ENCODE measurements at regions of chr13 and their contacts with region 1.

Region 1: DNA sequence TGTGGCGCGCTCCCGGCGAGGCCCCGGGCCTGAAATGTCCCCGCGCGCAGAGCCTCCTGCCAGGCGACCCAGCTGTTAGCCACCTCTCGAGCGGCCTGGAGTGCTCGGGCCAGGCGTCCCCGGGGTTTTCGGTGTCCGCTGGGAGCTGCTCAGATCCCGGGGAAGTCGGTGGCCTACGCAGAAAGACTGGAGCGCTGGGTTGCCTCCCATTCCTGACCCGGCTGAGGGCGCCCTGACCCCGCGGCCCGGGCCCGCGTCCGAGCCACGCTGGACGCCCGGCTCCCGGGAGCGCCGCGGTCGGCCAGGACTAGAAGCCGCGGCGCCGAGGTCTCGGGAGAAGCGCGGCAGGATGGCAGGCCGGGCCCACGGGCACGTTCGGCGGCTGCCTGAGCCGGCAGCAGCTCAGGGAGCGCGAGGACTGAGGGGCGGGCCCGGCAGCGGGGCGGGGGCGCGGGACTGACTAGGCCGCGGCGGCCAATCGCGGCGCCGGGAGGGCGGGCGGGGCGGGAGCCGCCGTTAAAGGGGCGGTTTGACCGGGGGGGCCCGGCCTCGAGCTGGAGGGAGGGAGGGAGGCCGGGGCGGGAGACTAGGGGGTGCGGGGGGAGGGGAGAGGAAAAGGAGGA is 1.3 kb upstream of the ZIC2 start:
- DNase-seq: peak in 6 of 9 donors; percentile 44 to 64 (median 55)
- ATAC-seq: peak; percentile 78
- H3K4me3 ChIP-seq: no peak overlapping the region
- H3K4me3 Mint-ChIP-seq: peak overlapping the region in 4 of 10 donors; percentile 42 to 68 (median 59)
- H3K27ac ChIP-seq: no peak overlapping the region
- H3K27ac Mint-ChIP-seq: no peak overlapping the region
- H3K4me1 ChIP-seq: peaks cover 8 to 18% of the 10 kb centered on the region in 2 donors
- H3K4me1 Mint-ChIP-seq: peaks cover 0 to 35% (median 23%) of the 10 kb centered on the region in 7 donors
- H3K27me3 ChIP-seq: peaks cover 22 to 66% of the 10 kb centered on the region in 2 donors
- H3K27me3 Mint-ChIP-seq: peaks cover 51 to 71% (median 54%) of the 10 kb centered on the region in 5 donors

Region 2: GRCh38 chr13:99969919-99970621 is 10.2 kb before region 1 on chr13:
- CTCF ChIA-PET with region 1: no interaction called
- POLR2A ChIA-PET with region 1: interaction called, 4 read pairs
- intact Hi-C with region 1: loop called (anchors 1 kb)
- DNase-seq: peak in 1 of 9 donors; percentile 49
- ATAC-seq: peak; percentile 48
- H3K4me3 ChIP-seq: no peak overlapping the region
- H3K4me3 Mint-ChIP-seq: peak overlapping the region; percentile 82 to 95 (median 86)
- H3K27ac ChIP-seq: no peak overlapping the region
- H3K27ac Mint-ChIP-seq: peak overlapping the region in 8 of 9 donors; percentile 53 to 91 (median 86)
- H3K4me1 ChIP-seq: peaks cover 0 to 10% of the 10 kb centered on the region in 2 donors
- H3K4me1 Mint-ChIP-seq: peaks cover 18 to 34% (median 25%) of the 10 kb centered on the region in 7 donors
- H3K27me3 ChIP-seq: peaks cover 47 to 74% of the 10 kb centered on the region in 2 donors
- H3K27me3 Mint-ChIP-seq: peaks cover 68 to 79% (median 70%) of the 10 kb centered on the region in 5 donors

Region 3: GRCh38 chr13:99990126-99990977 is 10.0 kb after region 1 on chr13:
- CTCF ChIA-PET with region 1: no interaction called
- POLR2A ChIA-PET with region 1: interaction called, 19 read pairs
- intact Hi-C with region 1: loop called (anchors 2 kb)
- DNase-seq: peak in 1 of 9 donors; percentile 19
- ATAC-seq: no peak
- H3K4me3 ChIP-seq: no peak overlapping the region
- H3K4me3 Mint-ChIP-seq: peak overlapping the region in 9 of 10 donors; percentile 23 to 64 (median 49)
- H3K27ac ChIP-seq: no peak overlapping the region
- H3K27ac Mint-ChIP-seq: peak overlapping the region in 3 of 9 donors; percentile 25 to 46 (median 34)
- H3K4me1 ChIP-seq: peaks cover 6 to 25% of the 10 kb centered on the region in 2 donors
- H3K4me1 Mint-ChIP-seq: peaks cover 4 to 36% (median 25%) of the 10 kb centered on the region in 7 donors
- H3K27me3 ChIP-seq: peaks cover 45 to 96% of the 10 kb centered on the region in 2 donors
- H3K27me3 Mint-ChIP-seq: peaks cover 73 to 96% (median 94%) of the 10 kb centered on the region in 5 donors

Region 4: DNA sequence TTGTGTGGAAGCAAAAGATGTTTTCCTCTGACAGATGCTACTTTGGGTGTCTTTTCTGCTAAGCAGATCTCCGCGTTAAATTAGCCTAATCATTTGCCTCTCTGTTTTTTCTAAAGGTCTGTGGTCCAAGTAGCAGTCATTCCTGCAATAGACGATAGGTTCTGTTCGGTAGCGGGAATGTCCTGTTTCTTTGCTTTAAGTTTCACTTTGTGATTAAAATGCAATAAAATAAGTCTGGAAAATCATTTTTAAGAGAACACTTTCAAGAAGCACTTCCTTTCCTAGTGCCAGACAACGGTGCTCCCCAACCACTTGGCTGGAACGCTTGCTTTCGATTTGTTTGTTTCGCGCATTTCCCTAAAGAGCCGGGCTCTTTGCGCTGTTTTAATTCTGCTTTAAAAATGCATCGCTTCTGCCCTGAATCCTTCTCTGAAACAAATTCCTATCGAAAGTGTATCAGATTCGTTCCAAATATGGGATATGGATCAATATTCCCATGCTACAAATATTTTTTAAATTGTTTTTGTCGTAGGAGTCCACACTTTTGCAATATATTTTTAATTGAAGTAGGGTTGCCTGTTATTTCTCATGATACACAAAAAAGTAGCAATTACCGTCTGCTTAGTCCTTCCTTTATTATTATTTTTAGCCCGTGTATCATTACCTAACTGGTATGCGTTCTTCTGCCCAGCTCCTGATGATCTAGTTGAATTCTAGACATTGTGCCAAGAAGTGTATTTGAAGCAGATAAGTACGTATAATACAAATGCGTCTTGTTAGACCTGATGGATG is 15.5 kb after region 1 on chr13:
- CTCF ChIA-PET with region 1: interaction called, 3 read pairs
- POLR2A ChIA-PET with region 1: interaction called, 19 read pairs
- intact Hi-C with region 1: loop called (anchors 2 kb)
- DNase-seq: peak in 1 of 9 donors; percentile 26
- ATAC-seq: no peak
- H3K4me3 ChIP-seq: no peak overlapping the region
- H3K4me3 Mint-ChIP-seq: peak overlapping the region in 4 of 10 donors; percentile 23 to 57 (median 32)
- H3K27ac ChIP-seq: no peak overlapping the region
- H3K27ac Mint-ChIP-seq: peak overlapping the region in 5 of 9 donors; percentile 22 to 81 (median 63)
- H3K4me1 ChIP-seq: peaks cover 0 to 4% of the 10 kb centered on the region in 2 donors
- H3K4me1 Mint-ChIP-seq: peaks cover 0 to 26% (median 11%) of the 10 kb centered on the region in 7 donors
- H3K27me3 ChIP-seq: peaks cover 39 to 68% of the 10 kb centered on the region in 2 donors
- H3K27me3 Mint-ChIP-seq: peaks cover 78 to 88% (median 83%) of the 10 kb centered on the region in 5 donors